ENCODE measurements at regions of chr1 and their contacts with region 1.

Region 1: GRCh38 chr1:66446261-66447001 is 87.5 kb upstream of the SGIP1 start:
- DNase-seq: peak; percentile 53
- ATAC-seq: peak; percentile 67
- H3K4me3 Mint-ChIP-seq: peak overlapping the region; percentile 85
- H3K27ac Mint-ChIP-seq: peak overlapping the region; percentile 98
- H3K4me1 Mint-ChIP-seq: peaks cover 33% of the 10 kb centered on the region
- H3K27me3 Mint-ChIP-seq: peaks cover 21% of the 10 kb centered on the region

Region 2: DNA sequence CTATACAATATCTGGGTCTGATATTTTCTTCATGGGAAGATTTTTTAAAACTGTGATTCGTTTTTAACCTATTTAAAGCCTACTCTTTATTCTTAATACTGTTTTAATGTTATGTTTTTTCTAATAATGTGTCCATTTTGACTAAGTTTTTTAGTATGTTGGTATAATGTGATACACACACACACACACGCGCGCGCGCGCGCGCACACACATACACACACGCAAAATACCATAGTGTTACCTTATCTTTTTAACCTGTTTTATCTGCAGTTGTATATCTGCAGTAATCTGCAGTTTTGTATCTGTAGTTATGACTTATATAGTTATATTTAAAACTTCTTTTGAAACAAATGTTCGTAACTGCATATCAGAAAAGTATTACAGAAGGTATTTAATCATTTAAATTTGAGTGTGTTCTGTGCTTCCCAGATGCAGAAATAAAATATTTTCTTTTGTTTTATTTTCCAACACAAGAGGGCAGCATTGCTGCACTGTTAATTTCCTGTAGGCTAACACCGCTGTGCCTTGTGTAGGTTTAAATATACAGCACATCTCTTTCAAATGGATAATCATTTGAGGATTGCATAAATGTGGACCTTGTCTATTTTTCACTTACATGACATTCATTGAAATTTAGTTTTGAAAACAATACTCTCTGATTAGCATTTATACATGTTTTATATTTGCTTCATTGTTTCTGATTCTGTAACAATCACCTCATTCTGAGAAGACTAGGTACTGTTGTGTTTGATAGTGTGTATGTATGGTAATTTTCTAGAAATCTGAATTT is 487.7 kb before region 1 on chr1:
- CTCF ChIA-PET with region 1: interaction called, 45 read pairs
- DNase-seq: peak; percentile 43
- ATAC-seq: peak; percentile 83
- H3K4me3 Mint-ChIP-seq: no peak overlapping the region
- H3K27ac Mint-ChIP-seq: no peak overlapping the region
- H3K4me1 Mint-ChIP-seq: peaks cover 6% of the 10 kb centered on the region
- H3K27me3 Mint-ChIP-seq: peaks cover 6% of the 10 kb centered on the region

Region 3: GRCh38 chr1:66282343-66282852 is 164.0 kb before region 1 on chr1:
- CTCF ChIA-PET with region 1: interaction called, 12 read pairs
- DNase-seq: peak; percentile 81
- ATAC-seq: peak; percentile 89
- H3K4me3 Mint-ChIP-seq: no peak overlapping the region
- H3K27ac Mint-ChIP-seq: peak overlapping the region; percentile 70
- H3K4me1 Mint-ChIP-seq: peaks cover 95% of the 10 kb centered on the region
- H3K27me3 Mint-ChIP-seq: no peaks in the 10 kb centered on the region

Region 4: DNA sequence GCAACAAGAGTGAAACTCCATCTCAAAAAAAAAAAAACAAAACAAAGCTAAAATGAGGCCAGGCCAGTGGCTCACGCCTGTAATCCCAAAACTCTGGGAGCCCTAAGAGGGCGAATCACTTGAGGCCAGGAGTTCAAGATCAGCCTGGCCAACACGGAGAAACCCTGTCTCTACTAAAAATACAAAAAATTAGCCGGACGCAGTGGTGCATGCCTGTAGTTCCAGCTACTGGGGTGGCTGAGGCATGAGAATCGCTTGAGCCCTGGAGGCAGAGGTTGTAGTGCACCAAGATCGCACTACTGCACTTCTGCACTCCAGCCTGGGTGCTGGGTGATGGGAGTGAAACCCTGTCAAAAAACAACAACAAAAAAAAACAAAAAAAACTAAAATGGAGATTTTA is 103.7 kb before region 1 on chr1:
- CTCF ChIA-PET with region 1: interaction called, 31 read pairs
- DNase-seq: no peak
- ATAC-seq: peak; percentile 32
- H3K4me3 Mint-ChIP-seq: peak overlapping the region; percentile 7
- H3K27ac Mint-ChIP-seq: peak overlapping the region; percentile 80
- H3K4me1 Mint-ChIP-seq: peaks cover 79% of the 10 kb centered on the region
- H3K27me3 Mint-ChIP-seq: no peaks in the 10 kb centered on the region

Region 5: GRCh38 chr1:66360285-66360724 is 86.1 kb before region 1 on chr1:
- CTCF ChIA-PET with region 1: interaction called, 13 read pairs
- DNase-seq: no peak
- ATAC-seq: no peak
- H3K4me3 Mint-ChIP-seq: no peak overlapping the region
- H3K27ac Mint-ChIP-seq: peak overlapping the region; percentile 64
- H3K4me1 Mint-ChIP-seq: peaks cover 81% of the 10 kb centered on the region
- H3K27me3 Mint-ChIP-seq: no peaks in the 10 kb centered on the region